Transverse colon (tissue), 4 donors: ENCODE measurements at regions of chr10 and their contacts with region 1.

Region 1: DNA sequence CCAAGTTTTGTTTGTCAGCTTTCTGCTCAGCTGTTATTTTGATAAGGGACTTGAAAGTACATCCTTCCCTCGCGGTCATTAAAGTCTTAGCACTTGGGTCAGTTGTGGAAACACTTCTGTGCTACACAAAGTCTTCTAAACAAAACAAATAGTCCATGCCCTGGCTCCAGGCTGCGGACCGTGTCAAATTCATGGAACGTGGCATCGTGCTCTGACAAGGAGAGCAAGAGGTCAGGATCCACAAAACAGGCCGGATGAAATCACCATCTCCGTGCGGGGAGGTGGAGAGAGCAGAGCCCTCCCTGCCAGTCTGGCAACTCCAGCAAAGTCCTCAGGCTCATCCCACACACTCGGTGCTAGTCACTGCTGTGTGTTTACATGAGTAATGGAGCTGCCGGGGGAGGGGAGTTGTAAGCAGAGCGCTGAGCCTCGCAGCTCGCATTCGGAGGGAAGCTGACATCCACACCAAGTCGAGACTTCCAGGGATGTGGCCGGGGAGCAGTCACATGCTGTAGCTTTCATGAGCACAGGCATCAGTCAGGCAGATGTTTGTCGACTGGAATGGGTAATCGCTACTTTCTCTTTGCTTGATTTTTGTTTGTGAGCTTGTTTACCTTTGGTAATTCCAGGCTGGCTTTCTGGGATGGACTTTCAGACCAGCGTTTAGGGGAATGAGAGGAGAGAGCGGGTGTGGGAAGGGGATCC is 147.6 kb downstream of the ARID5B start:
- DNase-seq: peak; percentile 79
- H3K4me3 ChIP-seq: peak overlapping the region; percentile 27 to 50 (median 30)
- H3K27ac ChIP-seq: peak overlapping the region; percentile 85 to 92 (median 89)
- H3K4me1 ChIP-seq: peaks cover 38 to 82% (median 55%) of the 10 kb centered on the region in 4 donors
- H3K27me3 ChIP-seq: no peaks in the 10 kb centered on the region
- CTCF ChIP-seq: no peak
- EP300 ChIP-seq: no peak
- POLR2A ChIP-seq: peak; percentile 86

Region 2: DNA sequence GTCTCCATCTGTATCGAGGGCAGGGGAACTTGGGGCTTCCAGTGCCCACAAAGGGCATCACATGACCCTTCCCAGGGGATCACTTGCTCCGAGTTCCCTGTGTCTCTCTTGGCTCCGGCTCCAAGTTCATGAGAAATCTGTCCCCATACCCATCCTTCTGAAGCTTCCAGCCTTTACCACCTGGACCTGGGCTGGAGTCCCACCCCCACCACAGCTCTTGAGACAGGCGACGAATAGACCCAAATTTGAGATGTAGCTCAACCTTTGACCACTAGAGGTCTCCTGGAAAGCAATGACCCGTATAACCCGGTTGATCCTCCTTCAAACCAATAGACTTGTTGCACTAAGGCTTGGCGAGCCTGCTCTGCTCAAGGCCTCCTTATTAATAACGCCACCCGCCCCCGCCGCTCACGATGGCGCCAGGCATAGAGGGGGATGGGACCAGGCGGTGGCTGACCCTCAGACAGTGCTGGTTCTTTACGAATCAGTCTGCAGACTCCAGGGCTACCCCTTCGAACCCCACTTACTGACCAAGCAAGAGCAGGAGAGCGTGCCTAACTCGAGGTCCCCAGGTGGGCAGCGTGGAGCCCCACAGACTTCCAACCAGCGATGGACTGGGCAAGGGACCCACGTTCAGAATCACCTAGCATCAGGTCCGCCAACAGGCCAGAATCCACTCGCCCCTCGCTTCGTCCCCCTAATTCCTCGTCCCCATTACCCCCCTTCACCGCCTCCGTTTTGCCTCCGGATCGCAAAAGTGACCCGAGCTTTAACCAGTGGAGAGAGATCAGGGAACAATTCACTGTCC is 152.0 kb before region 1 on chr10:
- in situ Hi-C with region 1: loop called (anchors 10 kb)
- intact Hi-C with region 1: no loop called
- DNase-seq: peak; percentile 58
- H3K4me3 ChIP-seq: peak overlapping the region in 1 of 4 donors; percentile 20
- H3K27ac ChIP-seq: peak overlapping the region; percentile 98
- H3K4me1 ChIP-seq: peaks cover 6 to 39% (median 30%) of the 10 kb centered on the region in 4 donors
- H3K27me3 ChIP-seq: no peaks in the 10 kb centered on the region
- CTCF ChIP-seq: peak; percentile 63 to 81 (median 65)
- EP300 ChIP-seq: no peak
- POLR2A ChIP-seq: no peak

Region 3: GRCh38 chr10:61903221-61903927 is 145.7 kb before region 1 on chr10:
- in situ Hi-C with region 1: loop called (anchors 10 kb)
- intact Hi-C with region 1: no loop called
- DNase-seq: peak; percentile 76
- H3K4me3 ChIP-seq: peak overlapping the region; percentile 61 to 90 (median 79)
- H3K27ac ChIP-seq: peak overlapping the region; percentile 98
- H3K4me1 ChIP-seq: peaks cover 10 to 47% (median 31%) of the 10 kb centered on the region in 4 donors
- H3K27me3 ChIP-seq: no peaks in the 10 kb centered on the region
- CTCF ChIP-seq: peak in 4 of 5 experiments; percentile 19 to 38 (median 30)
- EP300 ChIP-seq: no peak
- POLR2A ChIP-seq: peak; percentile 72

Region 4: DNA sequence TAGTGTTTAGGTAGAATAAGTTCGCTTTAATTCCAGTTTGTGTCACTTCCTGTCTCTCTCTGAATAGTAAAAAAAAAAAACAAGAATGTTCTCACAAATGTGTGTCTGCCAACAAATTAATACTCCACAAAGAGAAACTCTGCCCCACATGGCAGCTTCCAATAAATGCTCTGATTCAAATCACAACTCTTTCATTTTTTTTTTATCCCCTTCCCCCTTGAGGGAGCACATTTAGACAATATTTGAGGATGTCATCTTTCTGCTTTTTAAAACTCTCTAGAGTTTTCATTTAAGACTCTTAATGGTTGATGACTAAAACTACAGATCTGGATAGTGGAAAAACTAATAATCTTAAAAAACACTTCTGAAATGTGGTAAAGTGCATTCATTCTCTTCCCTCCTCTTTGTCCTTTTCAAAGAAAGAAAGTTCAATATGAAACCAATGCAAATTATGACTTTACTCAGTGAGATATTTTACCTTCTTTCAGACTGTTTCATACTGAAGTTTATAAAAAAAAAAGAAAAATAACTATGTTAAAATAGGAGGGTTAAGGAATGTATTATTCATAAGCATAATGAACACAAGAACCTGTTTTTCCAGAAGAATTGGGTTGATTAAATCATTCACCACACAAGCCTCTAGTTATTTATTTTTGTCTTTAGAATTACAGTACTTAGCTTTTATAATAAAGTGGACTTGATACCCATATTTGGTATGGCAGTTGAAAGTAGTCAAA is 105.2 kb before region 1 on chr10:
- in situ Hi-C with region 1: no loop called
- intact Hi-C with region 1: no loop called
- DNase-seq: no peak
- H3K4me3 ChIP-seq: no peak overlapping the region
- H3K27ac ChIP-seq: peak overlapping the region; percentile 71 to 85 (median 82)
- H3K4me1 ChIP-seq: peaks cover 12 to 59% (median 42%) of the 10 kb centered on the region in 4 donors
- H3K27me3 ChIP-seq: no peaks in the 10 kb centered on the region
- CTCF ChIP-seq: peak in 2 of 5 experiments; percentile 9 to 23
- EP300 ChIP-seq: no peak
- POLR2A ChIP-seq: no peak

Region 5: DNA sequence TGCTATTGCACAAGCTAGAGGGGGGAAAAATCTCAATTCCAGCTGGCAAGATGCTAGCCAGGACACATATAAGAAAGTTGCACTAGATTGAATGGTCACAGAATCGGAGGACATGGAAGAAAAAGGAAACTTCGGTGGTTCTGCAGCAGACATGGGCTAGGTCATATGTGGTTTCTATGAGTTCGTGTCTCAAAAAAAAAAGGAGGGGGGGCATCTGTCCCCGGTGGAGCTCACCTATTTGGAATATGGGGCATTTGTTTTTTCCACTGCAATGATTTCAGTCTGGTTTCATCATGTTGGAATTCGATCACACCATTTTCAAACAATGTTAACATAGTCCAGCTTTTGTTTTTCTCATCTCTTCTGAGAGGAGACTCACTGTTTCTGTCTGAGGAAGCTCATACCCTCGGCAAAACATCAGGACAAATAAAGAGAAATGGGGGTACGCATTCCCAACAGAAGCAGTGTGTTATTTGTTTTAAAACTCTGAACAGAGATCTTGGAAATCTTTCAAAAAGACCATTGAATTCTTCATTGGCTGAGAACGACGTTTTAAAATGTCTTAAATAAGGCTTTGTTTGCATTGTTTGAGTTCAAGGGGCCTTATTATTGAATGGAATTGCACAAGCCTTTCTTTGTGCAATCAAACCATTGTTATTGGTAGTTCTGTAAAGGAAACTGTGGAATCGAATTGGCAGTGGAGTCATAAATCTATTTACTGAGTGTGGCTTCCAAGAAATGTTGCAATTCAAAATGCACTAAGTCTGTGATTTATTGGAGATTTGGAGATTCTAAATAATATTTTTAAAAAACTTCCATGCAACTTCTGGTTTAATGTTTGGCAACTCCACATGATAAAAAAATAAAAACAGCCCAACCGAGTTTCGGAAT is 46.4 kb after region 1 on chr10:
- in situ Hi-C with region 1: no loop called
- intact Hi-C with region 1: loop called (anchors 5 kb)
- DNase-seq: no peak
- H3K4me3 ChIP-seq: no peak overlapping the region
- H3K27ac ChIP-seq: peak overlapping the region; percentile 67 to 77 (median 72)
- H3K4me1 ChIP-seq: peaks cover 19 to 47% (median 43%) of the 10 kb centered on the region in 4 donors
- H3K27me3 ChIP-seq: no peaks in the 10 kb centered on the region
- CTCF ChIP-seq: no peak
- EP300 ChIP-seq: no peak
- POLR2A ChIP-seq: no peak

Region 6: DNA sequence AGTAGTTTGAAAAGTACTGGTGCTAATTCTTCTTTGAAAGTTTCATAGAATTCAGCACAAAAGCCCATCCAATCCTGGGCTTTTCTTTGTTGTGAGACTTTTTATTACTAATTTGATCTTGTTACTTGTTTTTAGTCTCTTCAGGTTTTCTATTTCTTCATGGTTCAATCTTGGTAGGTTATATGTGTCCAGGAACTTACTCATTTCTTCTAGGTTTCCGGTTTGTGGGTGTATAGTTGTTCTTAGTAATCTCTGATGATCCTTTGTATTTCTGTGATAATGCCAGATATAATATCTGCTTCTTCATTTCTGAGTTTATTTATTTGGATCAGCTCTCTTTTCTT is 72.1 kb after region 1 on chr10:
- in situ Hi-C with region 1: no loop called
- intact Hi-C with region 1: no loop called
- DNase-seq: no peak
- H3K4me3 ChIP-seq: no peak overlapping the region
- H3K27ac ChIP-seq: no peak overlapping the region
- H3K4me1 ChIP-seq: no peaks in the 10 kb centered on the region
- H3K27me3 ChIP-seq: no peaks in the 10 kb centered on the region
- CTCF ChIP-seq: no peak
- EP300 ChIP-seq: no peak
- POLR2A ChIP-seq: no peak

Region 7: GRCh38 chr10:62231371-62231770 is 182.3 kb after region 1 on chr10:
- in situ Hi-C with region 1: loop called in 2 of 4 experiments (anchors 10 kb)
- intact Hi-C with region 1: no loop called
- DNase-seq: no peak
- H3K4me3 ChIP-seq: no peak overlapping the region
- H3K27ac ChIP-seq: no peak overlapping the region
- H3K4me1 ChIP-seq: peaks cover 0 to 6% (median 3%) of the 10 kb centered on the region in 4 donors
- H3K27me3 ChIP-seq: no peaks in the 10 kb centered on the region
- CTCF ChIP-seq: no peak
- EP300 ChIP-seq: no peak
- POLR2A ChIP-seq: no peak

Region 8: DNA sequence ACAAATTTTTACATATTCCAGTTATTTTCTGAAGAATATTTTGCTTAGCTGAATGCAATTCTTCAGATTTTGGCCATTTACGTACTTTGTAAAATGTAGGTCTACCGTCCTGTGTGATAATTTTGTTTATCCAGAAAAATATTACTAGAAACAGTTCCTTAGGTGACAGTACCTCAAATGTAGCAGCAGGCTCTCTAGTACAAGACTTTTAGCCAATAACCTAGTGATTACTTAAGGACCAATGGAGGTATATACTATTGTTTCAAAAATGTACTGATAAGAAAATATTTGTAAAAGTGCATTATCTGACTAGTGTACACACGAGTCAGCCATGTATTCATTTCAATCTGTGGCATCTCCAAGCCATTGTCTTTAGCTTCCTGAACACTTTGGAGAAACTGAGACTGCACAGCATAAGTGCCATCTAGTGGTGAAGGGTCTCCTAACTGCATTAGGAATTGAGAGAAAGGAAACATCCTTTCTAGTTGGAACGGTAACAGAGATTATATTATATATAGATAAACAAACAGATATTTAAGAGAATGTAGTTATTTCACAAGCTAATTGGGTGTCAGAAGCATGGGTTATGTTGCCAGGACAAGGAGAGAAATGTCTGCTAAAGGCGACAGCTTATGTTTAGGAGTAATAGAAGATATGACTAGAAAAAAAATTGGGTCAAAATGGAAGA is 195.9 kb after region 1 on chr10:
- in situ Hi-C with region 1: loop called in 2 of 4 experiments (anchors 5 to 10 kb)
- intact Hi-C with region 1: no loop called
- DNase-seq: peak; percentile 54
- H3K4me3 ChIP-seq: peak overlapping the region in 1 of 4 donors; percentile 14
- H3K27ac ChIP-seq: peak overlapping the region in 2 of 4 donors; percentile 4 to 64
- H3K4me1 ChIP-seq: peaks cover 0 to 20% (median 8%) of the 10 kb centered on the region in 4 donors
- H3K27me3 ChIP-seq: no peaks in the 10 kb centered on the region
- CTCF ChIP-seq: peak; percentile 80 to 92 (median 86)
- EP300 ChIP-seq: no peak
- POLR2A ChIP-seq: no peak